ENCODE measurements at regions of chr22 and their contacts with region 1.

Region 1: GRCh38 chr22:37199103-37199759 is 11.2 kb upstream of the C1QTNF6 start:
- DNase-seq: peak; percentile 97
- ATAC-seq: peak; percentile 88
- H3K4me3 ChIP-seq: peak overlapping the region; percentile 77 to 82
- H3K27ac ChIP-seq: peak overlapping the region; percentile 94
- H3K4me1 ChIP-seq: peaks cover 38 to 63% of the 10 kb centered on the region in 2 experiments
- H3K27me3 ChIP-seq: no peaks in the 10 kb centered on the region
- CTCF ChIP-seq: peak in 2 of 3 experiments; percentile 76 to 93; a peak in 4 of 6 replicates
- POLR2A ChIP-seq: peak; percentile 89
- RAD21 ChIP-seq: no peak

Region 2: GRCh38 chr22:36546092-36546804 is 653.0 kb before region 1 on chr22:
- CTCF ChIA-PET with region 1: no interaction called
- POLR2A ChIA-PET with region 1: no interaction called
- RAD21 ChIA-PET with region 1: no interaction called
- intact Hi-C with region 1: loop called (anchors 2 kb)
- DNase-seq: peak; percentile 73
- ATAC-seq: peak; percentile 83
- H3K4me3 ChIP-seq: peak overlapping the region in 1 of 2 experiments; percentile 15; a peak in 1 of 4 replicates
- H3K27ac ChIP-seq: no peak overlapping the region
- H3K4me1 ChIP-seq: peaks cover 14 to 51% of the 10 kb centered on the region in 2 experiments
- H3K27me3 ChIP-seq: peaks cover 5% of the 10 kb centered on the region; the same call in 1 of the 2 replicates
- CTCF ChIP-seq: peak; percentile 55 to 67 (median 57); a peak in 4 of 6 replicates
- POLR2A ChIP-seq: no peak
- RAD21 ChIP-seq: peak; percentile 80

Region 3: GRCh38 chr22:36606114-36606513 is 593.1 kb before region 1 on chr22:
- CTCF ChIA-PET with region 1: no interaction called
- POLR2A ChIA-PET with region 1: no interaction called
- RAD21 ChIA-PET with region 1: no interaction called
- intact Hi-C with region 1: no loop called
- DNase-seq: no peak
- ATAC-seq: no peak
- H3K4me3 ChIP-seq: no peak overlapping the region
- H3K27ac ChIP-seq: no peak overlapping the region
- H3K4me1 ChIP-seq: no peaks in the 10 kb centered on the region
- H3K27me3 ChIP-seq: peaks cover 63% of the 10 kb centered on the region
- CTCF ChIP-seq: no peak
- POLR2A ChIP-seq: no peak
- RAD21 ChIP-seq: no peak

Region 4: DNA sequence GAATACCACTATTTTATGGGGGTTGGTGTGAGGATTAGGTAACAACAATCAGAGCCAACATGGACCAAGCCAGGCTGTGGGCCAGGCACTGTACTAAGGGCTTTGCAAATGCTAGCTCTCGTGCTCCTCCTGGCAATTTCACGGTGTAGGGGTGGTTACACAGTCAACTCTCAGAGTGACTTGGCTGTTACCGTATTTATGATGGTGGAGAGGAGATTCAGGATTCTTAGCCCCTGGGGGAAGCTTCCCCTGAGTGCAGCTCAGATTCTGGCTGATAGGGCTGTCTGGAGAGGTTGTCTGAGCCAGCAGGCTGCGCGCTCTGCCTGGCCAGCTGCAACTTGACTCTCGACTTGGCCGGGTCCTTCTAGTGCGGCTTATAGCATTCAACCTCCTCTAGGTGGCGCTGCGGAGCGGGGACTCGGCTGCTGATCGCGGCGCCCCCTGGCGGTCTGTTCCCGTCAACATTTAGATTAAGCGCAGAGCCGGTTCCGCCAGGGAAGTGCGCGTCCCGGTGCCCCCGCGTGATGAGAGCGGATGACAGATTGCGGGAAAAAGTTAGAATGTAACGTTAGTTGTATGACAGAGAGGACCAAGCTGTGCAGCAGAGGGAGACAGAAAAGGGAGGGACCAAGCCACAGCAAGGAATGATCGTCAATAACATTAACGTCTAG is 343.0 kb before region 1 on chr22:
- CTCF ChIA-PET with region 1: no interaction called
- POLR2A ChIA-PET with region 1: no interaction called
- RAD21 ChIA-PET with region 1: no interaction called
- intact Hi-C with region 1: loop called (anchors 10 kb)
- DNase-seq: peak; percentile 73
- ATAC-seq: peak; percentile 92
- H3K4me3 ChIP-seq: peak overlapping the region in 1 of 2 experiments; percentile 8; a peak in 1 of 4 replicates
- H3K27ac ChIP-seq: no peak overlapping the region
- H3K4me1 ChIP-seq: peaks cover 0 to 19% of the 10 kb centered on the region in 2 experiments; a peak in 1 of 4 replicates
- H3K27me3 ChIP-seq: no peaks in the 10 kb centered on the region
- CTCF ChIP-seq: peak; percentile 100
- POLR2A ChIP-seq: no peak
- RAD21 ChIP-seq: peak; percentile 82

Region 5: GRCh38 chr22:37077884-37078485 is 121.2 kb before region 1 on chr22:
- CTCF ChIA-PET with region 1: interaction called, 5 read pairs
- POLR2A ChIA-PET with region 1: no interaction called
- RAD21 ChIA-PET with region 1: no interaction called
- intact Hi-C with region 1: loop called (anchors 1 kb)
- DNase-seq: peak; percentile 26
- ATAC-seq: peak; percentile 92
- H3K4me3 ChIP-seq: no peak overlapping the region
- H3K27ac ChIP-seq: no peak overlapping the region
- H3K4me1 ChIP-seq: peaks cover 0 to 5% of the 10 kb centered on the region in 2 experiments; a peak in 2 of 4 replicates
- H3K27me3 ChIP-seq: peaks cover 18% of the 10 kb centered on the region
- CTCF ChIP-seq: peak; percentile 80 to 100 (median 99); a peak in 5 of 6 replicates
- POLR2A ChIP-seq: no peak
- RAD21 ChIP-seq: peak; percentile 83

Region 6: DNA sequence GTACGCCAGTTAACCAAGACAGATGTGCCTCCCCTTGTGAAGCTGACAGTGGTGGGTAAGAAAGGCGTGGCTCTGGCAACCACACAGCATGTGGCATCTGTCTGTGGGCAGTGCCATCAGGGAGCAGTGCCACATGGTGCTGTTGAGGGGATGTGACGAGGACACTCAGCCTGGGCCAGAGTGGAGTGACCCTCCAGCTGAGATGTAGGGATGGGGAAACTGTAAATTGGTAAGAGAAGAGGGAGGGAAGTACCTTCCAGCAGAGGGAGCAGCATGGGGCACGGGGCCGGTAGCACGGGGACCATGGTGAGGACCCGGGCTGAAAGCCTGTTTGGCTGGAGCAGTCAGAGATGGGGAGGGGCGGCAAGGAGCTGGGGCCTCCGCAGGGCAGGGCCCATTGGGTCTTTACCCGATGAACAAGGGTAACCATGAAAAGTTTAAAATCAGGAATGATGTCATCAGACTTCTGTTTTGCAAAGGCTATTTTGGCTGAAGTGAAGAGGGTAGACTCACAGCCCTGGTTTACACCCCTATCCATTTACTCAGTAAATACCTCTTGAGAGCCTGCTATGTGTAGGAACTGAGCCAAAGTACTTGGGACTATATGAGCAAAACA is 100.1 kb before region 1 on chr22:
- CTCF ChIA-PET with region 1: no interaction called
- POLR2A ChIA-PET with region 1: no interaction called
- RAD21 ChIA-PET with region 1: no interaction called
- intact Hi-C with region 1: no loop called
- DNase-seq: no peak
- ATAC-seq: peak; percentile 76
- H3K4me3 ChIP-seq: no peak overlapping the region
- H3K27ac ChIP-seq: no peak overlapping the region
- H3K4me1 ChIP-seq: peaks cover 0 to 14% of the 10 kb centered on the region in 2 experiments; a peak in 1 of 4 replicates
- H3K27me3 ChIP-seq: no peaks in the 10 kb centered on the region; the same call in 1 of the 2 replicates
- CTCF ChIP-seq: peak in 2 of 3 experiments; percentile 42 to 44; a peak in 4 of 6 replicates
- POLR2A ChIP-seq: no peak
- RAD21 ChIP-seq: no peak

Region 7: GRCh38 chr22:37166675-37167066 is 32.6 kb before region 1 on chr22:
- CTCF ChIA-PET with region 1: interaction called, 14 read pairs
- POLR2A ChIA-PET with region 1: interaction called, 4 read pairs
- RAD21 ChIA-PET with region 1: interaction called, 3 to 5 read pairs
- intact Hi-C with region 1: loop called (anchors 1 kb)
- DNase-seq: no peak
- ATAC-seq: peak; percentile 97
- H3K4me3 ChIP-seq: peak overlapping the region in 1 of 2 experiments; percentile 36; a peak in 1 of 4 replicates
- H3K27ac ChIP-seq: no peak overlapping the region; the same call in 1 of the 2 replicates
- H3K4me1 ChIP-seq: peaks cover 0 to 21% of the 10 kb centered on the region in 2 experiments; a peak in 2 of 4 replicates
- H3K27me3 ChIP-seq: no peaks in the 10 kb centered on the region
- CTCF ChIP-seq: peak; percentile 92 to 94 (median 93)
- POLR2A ChIP-seq: no peak
- RAD21 ChIP-seq: peak; percentile 94

Region 8: GRCh38 chr22:37229805-37230672 is 30.8 kb after region 1 on chr22:
- CTCF ChIA-PET with region 1: interaction called, 19 read pairs
- POLR2A ChIA-PET with region 1: no interaction called
- RAD21 ChIA-PET with region 1: no interaction called
- intact Hi-C with region 1: no loop called
- DNase-seq: peak; percentile 51
- ATAC-seq: peak; percentile 76
- H3K4me3 ChIP-seq: peak overlapping the region in 1 of 2 experiments; percentile 48; a peak in 2 of 4 replicates
- H3K27ac ChIP-seq: peak overlapping the region; percentile 55
- H3K4me1 ChIP-seq: peaks cover 24 to 41% of the 10 kb centered on the region in 2 experiments
- H3K27me3 ChIP-seq: no peaks in the 10 kb centered on the region
- CTCF ChIP-seq: no peak
- POLR2A ChIP-seq: no peak
- RAD21 ChIP-seq: no peak

Region 9: GRCh38 chr22:37457093-37457893 is 258.1 kb after region 1 on chr22:
- CTCF ChIA-PET with region 1: interaction called, 3 read pairs
- POLR2A ChIA-PET with region 1: no interaction called
- RAD21 ChIA-PET with region 1: no interaction called
- intact Hi-C with region 1: loop called (anchors 1 kb)
- DNase-seq: peak; percentile 79
- ATAC-seq: peak; percentile 87
- H3K4me3 ChIP-seq: no peak overlapping the region
- H3K27ac ChIP-seq: peak overlapping the region; percentile 96
- H3K4me1 ChIP-seq: peaks cover 49 to 59% of the 10 kb centered on the region in 2 experiments
- H3K27me3 ChIP-seq: no peaks in the 10 kb centered on the region; the same call in 1 of the 2 replicates
- CTCF ChIP-seq: peak; percentile 97 to 99 (median 98)
- POLR2A ChIP-seq: no peak
- RAD21 ChIP-seq: peak; percentile 100

Region 10: DNA sequence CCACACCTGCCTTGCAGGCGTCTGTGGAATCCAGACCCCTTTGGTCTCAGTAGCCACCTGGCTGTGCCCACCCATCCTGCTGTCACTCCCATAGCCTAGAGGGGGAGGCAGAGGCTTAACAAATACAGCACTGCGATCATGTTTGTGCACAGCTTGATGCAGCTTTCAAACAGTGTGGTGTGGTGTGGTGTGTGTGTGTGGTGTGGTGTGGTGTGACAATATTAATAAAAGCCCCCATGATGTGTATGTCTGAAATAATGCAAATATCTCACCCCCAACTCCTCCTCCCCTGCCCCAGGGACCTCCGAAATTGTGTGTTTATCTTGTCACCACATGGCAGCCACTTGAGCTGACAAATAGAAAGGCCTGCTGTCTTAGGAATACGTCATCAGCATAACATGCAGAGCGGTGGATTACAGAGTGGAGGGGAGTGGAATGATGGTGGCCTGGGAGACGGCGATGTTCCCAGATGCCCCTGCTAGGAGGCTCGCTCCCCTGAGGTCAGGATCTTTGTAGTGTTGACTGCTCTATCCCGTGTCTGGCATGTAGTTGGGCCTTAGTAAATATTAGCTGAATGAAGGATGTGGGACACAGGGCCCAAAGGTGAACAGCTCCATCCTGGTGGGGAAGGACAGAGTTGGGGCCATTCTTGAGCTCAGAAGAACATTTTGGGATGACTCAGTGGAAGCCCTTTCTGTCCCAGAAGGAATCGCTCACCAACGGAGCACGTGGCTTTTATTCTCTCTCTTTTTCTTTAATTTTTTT is 462.1 kb after region 1 on chr22:
- CTCF ChIA-PET with region 1: no interaction called
- POLR2A ChIA-PET with region 1: no interaction called
- RAD21 ChIA-PET with region 1: no interaction called
- intact Hi-C with region 1: no loop called
- DNase-seq: no peak
- ATAC-seq: no peak
- H3K4me3 ChIP-seq: no peak overlapping the region
- H3K27ac ChIP-seq: no peak overlapping the region
- H3K4me1 ChIP-seq: peaks cover 11 to 34% of the 10 kb centered on the region in 2 experiments; a peak in 3 of 4 replicates
- H3K27me3 ChIP-seq: no peaks in the 10 kb centered on the region
- CTCF ChIP-seq: peak in 2 of 3 experiments; percentile 19 to 36; a peak in 3 of 6 replicates
- POLR2A ChIP-seq: no peak
- RAD21 ChIP-seq: no peak; the same call in 1 of the 2 replicates

Measured in HCT116 (cell line).